Prostate gland (tissue), 2 donors: ENCODE measurements at regions of chr3 and their contacts with region 1.

Region 1: DNA sequence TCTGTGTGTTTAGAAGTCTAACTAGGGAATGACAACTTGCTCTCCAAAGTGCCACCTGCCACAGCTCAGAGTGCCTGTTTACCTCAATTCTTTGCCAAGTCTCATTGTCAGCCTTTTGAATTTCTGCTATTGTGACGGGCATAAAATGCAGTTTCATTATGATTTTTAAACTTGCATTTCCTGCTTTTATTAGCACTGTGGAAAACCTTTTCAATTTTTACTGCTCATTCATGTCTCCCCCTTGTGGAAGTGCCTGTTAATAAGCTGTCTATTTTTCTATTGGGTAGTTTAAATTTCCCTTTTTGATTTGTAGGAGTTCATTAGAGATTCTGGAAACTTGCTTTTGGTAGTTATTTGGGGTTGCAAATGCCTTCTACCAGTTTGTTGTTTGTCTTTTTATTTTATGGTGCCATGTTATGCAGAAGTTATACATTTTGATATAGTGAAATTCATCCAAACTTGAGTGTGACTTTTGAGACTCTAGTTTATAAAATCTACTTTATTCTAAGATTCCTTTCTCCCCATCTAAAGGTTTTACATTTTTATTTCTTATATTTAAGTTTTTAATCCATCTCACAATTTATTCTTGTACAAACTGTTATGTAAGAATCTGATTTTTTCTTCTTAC is 53.9 kb upstream of the FRMD4B start:
- DNase-seq: no peak
- H3K4me3 ChIP-seq: no peak overlapping the region
- H3K27ac ChIP-seq: no peak overlapping the region
- H3K4me1 ChIP-seq: no peaks in the 10 kb centered on the region
- H3K27me3 ChIP-seq: no peaks in the 10 kb centered on the region
- CTCF ChIP-seq: peak in 3 of 4 experiments; percentile 35 to 65 (median 58)
- POLR2A ChIP-seq: no peak

Region 2: GRCh38 chr3:69542221-69543079 is 102.7 kb after region 1 on chr3:
- intact Hi-C with region 1: loop called (anchors 5 kb)
- DNase-seq: no peak
- H3K4me3 ChIP-seq: peak overlapping the region; percentile 46 to 47
- H3K27ac ChIP-seq: peak overlapping the region; percentile 41 to 53
- H3K4me1 ChIP-seq: no peaks in the 10 kb centered on the region
- H3K27me3 ChIP-seq: peaks cover 2% of the 10 kb centered on the region
- CTCF ChIP-seq: no peak
- POLR2A ChIP-seq: no peak

Region 3: DNA sequence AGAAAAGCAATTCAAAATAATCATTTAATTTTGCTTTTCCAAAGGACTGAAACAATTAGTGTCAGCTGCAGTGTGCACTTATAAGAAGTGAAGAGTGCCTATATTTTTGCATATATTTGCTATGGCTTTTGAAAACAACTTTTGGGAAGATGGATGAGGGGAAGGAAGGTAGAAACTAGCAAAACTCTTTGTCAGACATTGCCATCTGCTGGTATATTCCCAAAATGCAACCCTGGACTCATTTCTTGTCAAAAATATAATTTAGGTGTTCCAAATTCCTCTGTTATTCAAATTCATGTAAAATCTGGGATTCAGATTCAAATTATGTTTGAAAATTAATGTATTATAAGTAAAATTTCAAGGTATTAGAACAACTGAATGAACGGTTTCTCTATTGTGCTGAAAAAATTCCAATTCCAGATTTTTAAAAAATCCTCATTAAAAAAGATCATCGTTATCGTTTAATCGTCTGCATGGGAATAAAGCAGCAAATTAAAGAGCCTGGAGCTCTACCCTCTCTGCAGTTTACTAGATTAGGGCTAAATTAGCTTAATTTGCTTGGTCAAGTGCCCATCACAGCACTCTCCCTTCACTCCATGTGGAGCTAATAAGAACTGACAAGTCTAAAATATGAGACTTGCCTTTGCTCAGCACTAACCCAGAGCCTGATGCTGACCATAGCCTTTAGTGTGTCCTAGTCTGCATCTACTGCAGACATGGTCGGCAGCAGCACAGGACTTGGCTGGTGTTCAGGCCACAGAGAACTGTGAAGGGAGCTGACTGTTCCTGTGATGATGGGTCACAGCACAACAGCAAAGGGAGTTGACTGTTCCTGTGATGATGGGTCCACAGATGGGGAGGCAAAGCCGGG is 231.6 kb after region 1 on chr3:
- intact Hi-C with region 1: loop called (anchors 5 kb)
- DNase-seq: peak; percentile 29
- H3K4me3 ChIP-seq: no peak overlapping the region
- H3K27ac ChIP-seq: no peak overlapping the region
- H3K4me1 ChIP-seq: no peaks in the 10 kb centered on the region
- H3K27me3 ChIP-seq: no peaks in the 10 kb centered on the region
- CTCF ChIP-seq: peak; percentile 27 to 78 (median 68)
- POLR2A ChIP-seq: no peak